T-cell (primary cell): ENCODE measurements at regions of chr4 and their contacts with region 1.

Region 1: GRCh38 chr4:26607776-26608175 is 23.9 kb downstream of the TBC1D19 start:
- DNase-seq: no peak
- ATAC-seq: no peak
- H3K4me3 ChIP-seq: no peak overlapping the region
- H3K4me3 Mint-ChIP-seq: no peak overlapping the region
- H3K27ac ChIP-seq: no peak overlapping the region
- H3K27ac Mint-ChIP-seq: no peak overlapping the region
- H3K4me1 ChIP-seq: peaks cover 0 to 7% of the 10 kb centered on the region in 2 experiments
- H3K4me1 Mint-ChIP-seq: peaks cover 25 to 37% (median 36%) of the 10 kb centered on the region in 3 donors
- H3K27me3 ChIP-seq: no peaks in the 10 kb centered on the region
- H3K27me3 Mint-ChIP-seq: no peaks in the 10 kb centered on the region

Region 2: GRCh38 chr4:26619784-26620183 is 12.0 kb after region 1 on chr4:
- CTCF ChIA-PET with region 1: no interaction called
- POLR2A ChIA-PET with region 1: interaction called in 1 of 2 experiments, 12 read pairs
- DNase-seq: no peak
- ATAC-seq: no peak
- H3K4me3 ChIP-seq: no peak overlapping the region
- H3K4me3 Mint-ChIP-seq: no peak overlapping the region
- H3K27ac ChIP-seq: no peak overlapping the region
- H3K27ac Mint-ChIP-seq: no peak overlapping the region
- H3K4me1 ChIP-seq: no peaks in the 10 kb centered on the region
- H3K4me1 Mint-ChIP-seq: no peaks in the 10 kb centered on the region
- H3K27me3 ChIP-seq: no peaks in the 10 kb centered on the region
- H3K27me3 Mint-ChIP-seq: no peaks in the 10 kb centered on the region